Activated CD4-positive, alpha-beta memory T cell treated with anti-CD3 and anti-CD28 coated beads for 36 hours (primary cell): ENCODE measurements at regions of chr20 and their contacts with region 1.

Region 1: DNA sequence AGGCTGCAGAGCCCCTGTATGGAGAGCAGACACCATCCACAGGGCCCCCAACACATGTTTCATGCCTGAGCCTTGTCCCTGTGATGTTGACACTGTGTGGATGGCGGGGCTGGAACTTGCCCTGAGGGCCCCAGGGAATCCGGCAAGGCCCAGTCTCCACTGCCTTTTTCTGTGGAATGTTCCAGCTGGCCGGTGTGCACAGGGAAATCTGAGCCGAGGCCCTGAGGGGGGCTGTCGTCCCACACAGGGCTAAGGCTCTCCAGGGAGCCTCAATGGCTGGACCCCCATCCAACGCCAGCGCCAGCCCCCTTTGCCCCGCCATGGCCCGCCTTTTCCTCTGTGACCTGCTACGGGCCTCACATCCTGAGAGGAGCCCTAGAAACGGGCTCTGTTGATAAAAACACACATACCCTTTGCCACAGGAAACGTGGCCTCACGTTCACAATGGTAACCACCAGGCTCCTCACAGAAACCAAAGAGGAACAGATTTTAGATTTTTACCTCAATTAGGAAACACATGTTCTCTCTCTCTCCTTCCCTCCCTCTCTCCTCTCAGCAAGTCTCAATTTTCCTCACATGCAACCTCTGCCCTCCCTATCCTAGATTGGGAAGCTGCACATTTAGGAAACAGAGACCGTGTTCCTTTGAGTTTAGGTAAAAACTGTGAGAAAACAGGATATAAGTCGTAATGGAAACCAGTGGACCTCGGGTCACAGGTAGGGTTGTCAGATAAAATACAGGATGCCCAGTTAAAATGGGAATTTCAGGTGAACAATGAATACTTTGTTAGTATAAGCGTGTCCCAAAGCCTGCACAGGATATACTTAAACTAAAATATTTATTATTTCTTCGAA is 13.7 kb upstream of the ZNF831 start:
- DNase-seq: peak; percentile 85
- H3K4me3 Mint-ChIP-seq: peak overlapping the region; percentile 62
- H3K27ac Mint-ChIP-seq: peak overlapping the region; percentile 92
- H3K4me1 Mint-ChIP-seq: peaks cover 88% of the 10 kb centered on the region
- H3K27me3 Mint-ChIP-seq: no peaks in the 10 kb centered on the region

Region 2: DNA sequence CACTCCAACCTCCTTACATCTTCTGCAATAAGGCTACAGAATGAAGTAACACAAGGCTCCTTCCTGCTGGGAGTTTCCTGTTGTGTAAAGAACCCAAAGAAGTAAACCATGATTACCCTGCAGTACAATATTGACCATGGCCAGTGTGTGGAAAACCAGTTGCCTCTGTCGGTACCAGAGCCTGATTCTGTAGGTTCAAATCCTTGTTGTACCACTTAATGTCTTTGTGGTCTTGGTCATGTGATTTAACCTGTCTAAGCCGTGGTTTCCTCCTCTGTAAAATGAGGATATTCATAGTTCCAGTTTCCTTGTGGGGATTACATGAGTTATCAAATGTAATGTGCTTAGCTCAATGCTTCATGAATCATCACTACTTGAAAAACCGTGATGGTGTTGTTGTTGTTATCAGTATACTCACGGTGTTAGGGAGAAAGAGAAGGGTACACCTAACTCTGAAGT is 47.0 kb before region 1 on chr20:
- CTCF ChIA-PET with region 1: interaction called, 4 read pairs
- POLR2A ChIA-PET with region 1: no interaction called
- intact Hi-C with region 1: loop called (anchors 5 kb)
- DNase-seq: no peak
- H3K4me3 Mint-ChIP-seq: no peak overlapping the region
- H3K27ac Mint-ChIP-seq: peak overlapping the region; percentile 18
- H3K4me1 Mint-ChIP-seq: peaks cover 13% of the 10 kb centered on the region
- H3K27me3 Mint-ChIP-seq: no peaks in the 10 kb centered on the region

Region 3: GRCh38 chr20:59120491-59120890 is 29.4 kb before region 1 on chr20:
- CTCF ChIA-PET with region 1: interaction called, 11 read pairs
- POLR2A ChIA-PET with region 1: interaction called, 32 read pairs
- intact Hi-C with region 1: loop called (anchors 1 kb)
- DNase-seq: peak; percentile 65
- H3K4me3 Mint-ChIP-seq: no peak overlapping the region
- H3K27ac Mint-ChIP-seq: peak overlapping the region; percentile 94
- H3K4me1 Mint-ChIP-seq: peaks cover 71% of the 10 kb centered on the region
- H3K27me3 Mint-ChIP-seq: no peaks in the 10 kb centered on the region

Region 4: DNA sequence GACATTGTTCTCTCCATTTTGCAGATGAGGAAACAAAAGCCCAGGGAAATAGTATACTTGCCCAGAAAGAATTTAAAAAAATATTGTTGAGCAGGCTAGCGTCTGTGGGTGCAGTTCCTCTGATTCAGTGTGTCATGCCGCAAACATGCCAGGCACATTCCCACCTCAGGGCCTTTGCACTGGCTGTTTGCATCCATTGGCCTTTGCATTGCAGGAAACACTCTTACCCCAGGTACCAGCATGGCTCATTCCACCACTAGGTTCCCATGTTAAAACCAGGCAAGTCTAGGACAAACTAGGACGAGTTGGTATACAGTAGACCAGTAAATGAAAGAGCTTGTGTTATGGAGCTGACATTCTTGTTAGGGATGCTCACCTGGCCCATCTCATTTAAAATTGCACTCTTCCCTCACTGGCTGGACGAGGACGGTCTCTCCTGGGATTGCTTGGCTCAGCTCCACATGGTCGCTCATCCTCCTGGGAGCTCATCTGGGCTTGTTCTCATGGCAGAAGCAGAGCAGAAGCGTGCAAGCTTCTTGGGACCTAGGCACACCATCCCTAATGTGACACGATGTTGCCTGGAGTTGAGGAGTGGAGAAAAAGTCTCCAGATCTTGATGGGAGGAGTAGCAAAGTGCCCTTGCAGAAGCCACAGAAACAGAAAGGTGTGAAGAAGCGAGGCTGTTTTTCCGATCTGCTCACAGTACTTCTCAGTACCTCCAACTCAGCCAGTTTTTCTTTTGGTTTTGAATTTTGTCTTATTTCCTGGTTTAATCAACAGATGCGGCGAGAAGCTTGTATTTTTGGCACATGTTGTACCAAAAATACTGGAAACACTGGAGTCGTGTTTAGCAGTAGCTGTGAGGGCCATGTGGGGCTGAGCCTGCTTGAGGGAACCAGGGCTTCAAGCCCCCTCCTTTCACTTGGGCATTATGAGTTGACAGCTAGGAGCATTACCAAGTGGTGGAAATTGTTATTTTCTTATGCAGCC is 27.7 kb after region 1 on chr20:
- CTCF ChIA-PET with region 1: interaction called, 7 read pairs
- POLR2A ChIA-PET with region 1: interaction called, 3 read pairs
- intact Hi-C with region 1: loop called (anchors 1 kb)
- DNase-seq: peak; percentile 63
- H3K4me3 Mint-ChIP-seq: peak overlapping the region; percentile 67
- H3K27ac Mint-ChIP-seq: peak overlapping the region; percentile 93
- H3K4me1 Mint-ChIP-seq: peaks cover 84% of the 10 kb centered on the region
- H3K27me3 Mint-ChIP-seq: no peaks in the 10 kb centered on the region

Region 5: GRCh38 chr20:59222253-59223181 is 72.6 kb after region 1 on chr20:
- CTCF ChIA-PET with region 1: no interaction called
- POLR2A ChIA-PET with region 1: no interaction called
- intact Hi-C with region 1: no loop called
- DNase-seq: peak; percentile 86
- H3K4me3 Mint-ChIP-seq: peak overlapping the region; percentile 68
- H3K27ac Mint-ChIP-seq: no peak overlapping the region
- H3K4me1 Mint-ChIP-seq: peaks cover 26% of the 10 kb centered on the region
- H3K27me3 Mint-ChIP-seq: no peaks in the 10 kb centered on the region

Region 6: GRCh38 chr20:59268870-59269269 is 119.0 kb after region 1 on chr20:
- CTCF ChIA-PET with region 1: no interaction called
- POLR2A ChIA-PET with region 1: no interaction called
- intact Hi-C with region 1: no loop called
- DNase-seq: no peak
- H3K4me3 Mint-ChIP-seq: no peak overlapping the region
- H3K27ac Mint-ChIP-seq: no peak overlapping the region
- H3K4me1 Mint-ChIP-seq: peaks cover 18% of the 10 kb centered on the region
- H3K27me3 Mint-ChIP-seq: no peaks in the 10 kb centered on the region